Activated B cell treated with CpG ODN at 0.5 μM for 24 hours (primary cell): ENCODE measurements at regions of chr11 and their contacts with region 1.

Region 1: DNA sequence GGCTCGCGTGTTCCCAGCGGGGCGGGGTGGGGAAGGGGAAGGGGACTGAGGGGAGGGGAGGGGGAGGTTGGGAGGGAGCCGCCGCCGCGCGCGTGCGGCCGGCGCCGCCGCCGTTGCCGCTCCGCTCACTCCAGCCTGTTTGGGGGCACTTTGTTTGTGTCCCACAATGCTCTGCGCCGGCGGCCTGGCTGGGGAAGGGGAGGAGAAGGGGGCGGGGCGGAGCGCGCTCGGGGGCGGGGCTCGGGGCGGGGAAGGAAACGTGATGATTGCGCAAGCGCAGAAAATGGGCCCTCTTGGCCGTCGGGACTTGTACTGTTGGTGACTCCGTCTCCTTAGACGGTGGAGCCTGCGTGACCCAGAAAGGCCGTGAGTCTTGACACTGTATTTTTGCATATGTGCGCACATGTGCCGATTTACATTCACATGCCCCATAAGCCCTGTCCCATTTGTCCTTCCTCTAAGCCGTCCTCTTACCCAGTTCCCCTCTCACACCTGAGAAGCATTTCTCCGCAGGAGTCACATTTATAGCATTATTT is at the start of gene ZBTB44:
- DNase-seq: peak; percentile 76
- ATAC-seq: peak; percentile 78
- H3K4me3 Mint-ChIP-seq: peak within 1 kb of the TSS; percentile 89
- H3K27ac Mint-ChIP-seq: peak within 1 kb of the TSS; percentile 95
- H3K4me1 Mint-ChIP-seq: peaks cover 36% of the 10 kb centered on the region
- H3K27me3 Mint-ChIP-seq: no peaks in the 10 kb centered on the region
- CTCF ChIP-seq: no peak
- total RNA-seq, gene ZBTB44: 49.0 and 61.5 TPM in 2 replicates

Region 2: DNA sequence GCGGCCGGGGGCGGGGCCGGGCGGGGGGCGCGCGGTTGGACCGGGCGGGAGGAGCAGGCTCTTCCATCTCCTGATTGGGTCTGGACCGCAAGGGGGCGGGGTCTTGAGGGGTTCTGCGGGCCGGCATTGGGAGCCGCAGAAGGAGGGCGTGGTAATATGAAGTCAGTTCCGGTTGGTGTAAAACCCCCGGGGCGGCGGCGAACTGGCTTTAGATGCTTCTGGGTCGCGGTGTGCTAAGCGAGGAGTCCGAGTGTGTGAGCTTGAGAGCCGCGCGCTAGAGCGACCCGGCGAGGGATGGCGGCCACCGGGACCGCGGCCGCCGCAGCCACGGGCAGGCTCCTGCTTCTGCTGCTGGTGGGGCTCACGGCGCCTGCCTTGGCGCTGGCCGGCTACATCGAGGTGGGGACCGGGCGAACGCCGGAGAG is 245.1 kb before region 1 on chr11 and contains the start of gene APLP2:
- CTCF ChIA-PET with region 1: no interaction called
- POLR2A ChIA-PET with region 1: no interaction called
- intact Hi-C with region 1: loop called (anchors 1 kb)
- DNase-seq: peak; percentile 92
- ATAC-seq: peak; percentile 94
- H3K4me3 Mint-ChIP-seq: peak within 1 kb of the TSS; percentile 92
- H3K27ac Mint-ChIP-seq: peak within 1 kb of the TSS; percentile 83
- H3K4me1 Mint-ChIP-seq: peaks cover 36% of the 10 kb centered on the region
- H3K27me3 Mint-ChIP-seq: peaks cover 8% of the 10 kb centered on the region
- CTCF ChIP-seq: no peak
- total RNA-seq, gene APLP2: 47.7 and 50.8 TPM in 2 replicates

Region 3: DNA sequence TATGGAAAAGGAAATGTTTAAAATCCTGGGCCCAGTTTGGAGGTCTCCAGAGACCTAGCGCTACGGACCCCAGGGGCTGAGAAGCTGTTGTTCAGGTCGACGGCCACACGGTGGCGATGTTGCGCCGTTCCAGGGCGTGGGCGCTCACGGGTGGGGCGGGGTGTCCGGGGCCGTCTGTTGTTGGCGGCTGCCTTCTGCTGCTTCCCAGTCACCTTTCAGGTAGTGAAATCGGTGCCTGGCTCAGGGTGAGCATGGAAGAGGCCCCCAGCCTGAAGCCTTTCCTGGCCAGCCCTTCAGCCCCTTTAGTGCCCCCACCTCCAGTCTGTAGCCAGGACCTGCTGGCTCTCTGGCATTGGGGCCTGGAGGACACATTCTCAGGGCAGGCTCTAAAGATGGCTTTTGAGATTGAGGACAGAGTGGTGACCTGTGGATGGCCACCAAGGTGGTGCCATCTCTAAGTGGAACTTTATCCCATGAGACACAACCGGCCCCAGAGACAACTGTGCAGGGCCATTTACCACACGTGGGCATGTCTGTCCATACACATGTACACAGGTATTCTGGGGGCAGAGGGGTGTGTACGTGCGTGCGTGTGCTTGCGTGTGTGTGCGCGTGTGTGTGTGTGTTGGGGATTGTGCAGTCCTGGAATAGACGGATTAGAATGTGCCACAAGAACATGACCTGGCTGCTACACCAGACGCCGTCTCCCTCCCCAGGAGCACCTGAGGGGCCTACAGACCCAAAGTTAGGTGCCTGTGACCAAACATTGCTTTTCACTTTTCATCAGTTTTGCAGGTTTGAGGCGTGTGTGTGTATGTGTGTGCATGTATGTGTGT is 101.5 kb before region 1 on chr11:
- CTCF ChIA-PET with region 1: interaction called, 4 read pairs
- POLR2A ChIA-PET with region 1: no interaction called
- intact Hi-C with region 1: loop called (anchors 1 kb)
- DNase-seq: peak; percentile 77
- ATAC-seq: peak; percentile 99
- H3K4me3 Mint-ChIP-seq: no peak overlapping the region
- H3K27ac Mint-ChIP-seq: no peak overlapping the region
- H3K4me1 Mint-ChIP-seq: peaks cover 6% of the 10 kb centered on the region
- H3K27me3 Mint-ChIP-seq: no peaks in the 10 kb centered on the region
- CTCF ChIP-seq: peak; percentile 73

Region 4: DNA sequence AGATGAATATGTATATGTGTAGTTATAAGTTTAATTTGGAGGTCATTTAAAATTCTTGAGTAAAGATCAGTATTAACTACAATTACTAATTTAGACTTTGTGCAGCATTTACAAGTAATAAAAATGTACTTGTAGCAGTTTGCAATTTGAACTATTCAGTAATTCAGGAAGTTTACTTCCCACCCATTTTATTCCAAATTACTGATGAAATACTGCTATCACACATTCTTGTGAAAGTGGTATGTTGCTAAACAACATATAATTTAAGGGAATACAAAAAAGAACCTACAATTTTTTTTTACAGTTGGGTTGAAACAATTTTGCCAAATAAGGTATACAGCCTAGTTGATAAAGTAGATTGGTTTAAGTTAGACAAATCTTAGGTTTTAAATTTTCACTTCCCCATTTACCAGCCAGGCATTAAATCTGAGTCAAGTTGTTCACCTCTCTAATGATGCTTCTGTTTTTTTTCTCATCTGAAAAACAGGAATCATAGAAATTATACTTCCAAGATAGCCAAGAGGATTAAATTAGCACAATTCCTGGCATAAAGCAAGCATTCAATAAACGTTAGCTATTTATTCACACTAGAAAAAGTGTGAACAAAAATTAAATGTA is 45.4 kb before region 1 on chr11:
- CTCF ChIA-PET with region 1: no interaction called
- POLR2A ChIA-PET with region 1: no interaction called
- intact Hi-C with region 1: loop called (anchors 1 kb)
- DNase-seq: no peak
- ATAC-seq: peak; percentile 90
- H3K4me3 Mint-ChIP-seq: no peak overlapping the region
- H3K27ac Mint-ChIP-seq: peak overlapping the region; percentile 50
- H3K4me1 Mint-ChIP-seq: peaks cover 30% of the 10 kb centered on the region
- H3K27me3 Mint-ChIP-seq: no peaks in the 10 kb centered on the region
- CTCF ChIP-seq: no peak

Region 5: GRCh38 chr11:130347261-130347660 is 32.4 kb after region 1 on chr11:
- CTCF ChIA-PET with region 1: no interaction called
- POLR2A ChIA-PET with region 1: no interaction called
- intact Hi-C with region 1: no loop called
- DNase-seq: no peak
- ATAC-seq: no peak
- H3K4me3 Mint-ChIP-seq: no peak overlapping the region
- H3K27ac Mint-ChIP-seq: no peak overlapping the region
- H3K4me1 Mint-ChIP-seq: no peaks in the 10 kb centered on the region
- H3K27me3 Mint-ChIP-seq: no peaks in the 10 kb centered on the region
- CTCF ChIP-seq: no peak

Region 6: GRCh38 chr11:130359419-130359818 is 44.6 kb after region 1 on chr11:
- CTCF ChIA-PET with region 1: no interaction called
- POLR2A ChIA-PET with region 1: no interaction called
- intact Hi-C with region 1: no loop called
- DNase-seq: no peak
- ATAC-seq: no peak
- H3K4me3 Mint-ChIP-seq: no peak overlapping the region
- H3K27ac Mint-ChIP-seq: no peak overlapping the region
- H3K4me1 Mint-ChIP-seq: no peaks in the 10 kb centered on the region
- H3K27me3 Mint-ChIP-seq: no peaks in the 10 kb centered on the region
- CTCF ChIP-seq: no peak

Region 7: GRCh38 chr11:130861902-130862860 is 547.4 kb after region 1 on chr11:
- CTCF ChIA-PET with region 1: no interaction called
- POLR2A ChIA-PET with region 1: no interaction called
- intact Hi-C with region 1: loop called (anchors 10 kb)
- DNase-seq: peak; percentile 75
- ATAC-seq: peak; percentile 91
- H3K4me3 Mint-ChIP-seq: no peak overlapping the region
- H3K27ac Mint-ChIP-seq: no peak overlapping the region
- H3K4me1 Mint-ChIP-seq: peaks cover 10% of the 10 kb centered on the region
- H3K27me3 Mint-ChIP-seq: no peaks in the 10 kb centered on the region
- CTCF ChIP-seq: peak; percentile 98